ENCODE measurements at regions of chr16 and their contacts with region 1.

Region 1: DNA sequence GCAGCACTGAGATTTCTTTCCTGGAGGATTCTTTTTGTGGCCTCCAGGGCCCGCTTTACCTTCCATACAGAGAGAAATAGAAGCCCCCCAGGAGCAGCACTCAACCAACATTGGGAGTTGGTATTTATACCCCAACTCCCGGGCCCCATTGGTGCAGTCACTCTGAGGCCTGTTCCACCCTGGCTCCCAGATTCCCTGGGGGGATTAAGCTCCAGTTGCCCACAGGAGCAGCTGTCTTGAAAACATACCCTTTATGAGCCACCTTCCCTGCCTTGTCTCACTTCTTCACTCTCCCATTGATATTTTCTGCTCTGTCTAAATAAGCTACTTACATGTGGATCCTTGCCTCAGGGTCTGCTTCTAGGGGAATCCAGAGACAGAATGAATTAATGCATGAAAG is 167.8 kb downstream of the KATNIP start:
- DNase-seq: no peak
- ATAC-seq: no peak

Region 2: GRCh38 chr16:27698266-27698665 is 19.5 kb before region 1 on chr16:
- intact Hi-C with region 1: loop called (anchors 2 kb)
- DNase-seq: peak; percentile 38
- ATAC-seq: no peak

Region 3: GRCh38 chr16:27795992-27796614 is 78.4 kb after region 1 on chr16:
- intact Hi-C with region 1: no loop called
- DNase-seq: peak; percentile 70
- ATAC-seq: peak; percentile 37

Region 4: DNA sequence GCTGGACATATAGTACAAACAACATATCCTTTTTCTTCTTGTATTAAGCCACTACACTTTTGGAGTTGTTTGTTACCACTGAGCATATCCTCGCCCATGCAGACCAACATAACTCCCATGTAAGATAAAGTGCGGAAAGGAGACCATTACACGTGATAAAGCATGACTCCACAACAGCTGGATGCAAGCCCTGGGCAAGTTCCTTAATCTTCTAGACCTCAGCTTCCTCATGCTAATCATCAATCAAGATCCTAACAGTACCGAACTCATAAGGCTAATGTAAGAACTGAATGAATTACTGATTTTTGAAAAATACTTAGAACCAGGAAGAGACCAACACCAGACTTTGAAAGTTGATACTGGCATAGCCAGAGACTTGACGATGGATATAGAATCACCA is 392.8 kb after region 1 on chr16:
- intact Hi-C with region 1: no loop called
- DNase-seq: no peak
- ATAC-seq: peak; percentile 52

Measured in left ventricle myocardium superior (tissue), 1 donor.